ENCODE measurements at regions of chr1 and their contacts with region 1.

Region 1: DNA sequence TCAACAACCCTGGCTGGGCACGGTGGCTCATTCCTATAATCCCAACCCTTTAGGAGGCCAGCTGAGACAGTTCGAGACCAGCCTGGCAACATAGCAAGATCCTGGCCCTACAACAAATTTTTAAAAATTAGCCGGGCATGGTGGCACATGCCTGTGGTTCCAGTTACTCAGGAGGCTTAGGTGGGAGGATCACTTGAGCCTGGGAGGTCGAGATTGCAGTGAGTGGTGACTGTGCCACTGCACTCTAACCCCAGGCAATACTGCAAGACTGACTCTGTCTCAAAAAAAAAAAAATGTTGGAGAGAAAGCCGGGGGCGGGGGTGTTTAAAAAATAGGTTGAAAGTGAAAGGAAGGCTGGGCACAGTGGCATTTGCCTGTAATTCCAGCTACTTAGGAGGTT is 16.5 kb downstream of the CLDN19 start:
- DNase-seq: no peak
- H3K4me3 ChIP-seq: no peak overlapping the region
- H3K27ac ChIP-seq: no peak overlapping the region
- H3K4me1 ChIP-seq: no peaks in the 10 kb centered on the region
- H3K27me3 ChIP-seq: no peaks in the 10 kb centered on the region
- CTCF ChIP-seq: no peak
- POLR2A ChIP-seq: no peak

Region 2: GRCh38 chr1:42860339-42861013 is 137.0 kb after region 1 on chr1:
- intact Hi-C with region 1: no loop called
- DNase-seq: no peak
- H3K4me3 ChIP-seq: no peak overlapping the region
- H3K27ac ChIP-seq: no peak overlapping the region
- H3K4me1 ChIP-seq: no peaks in the 10 kb centered on the region
- H3K27me3 ChIP-seq: no peaks in the 10 kb centered on the region
- CTCF ChIP-seq: no peak
- POLR2A ChIP-seq: no peak

Region 3: DNA sequence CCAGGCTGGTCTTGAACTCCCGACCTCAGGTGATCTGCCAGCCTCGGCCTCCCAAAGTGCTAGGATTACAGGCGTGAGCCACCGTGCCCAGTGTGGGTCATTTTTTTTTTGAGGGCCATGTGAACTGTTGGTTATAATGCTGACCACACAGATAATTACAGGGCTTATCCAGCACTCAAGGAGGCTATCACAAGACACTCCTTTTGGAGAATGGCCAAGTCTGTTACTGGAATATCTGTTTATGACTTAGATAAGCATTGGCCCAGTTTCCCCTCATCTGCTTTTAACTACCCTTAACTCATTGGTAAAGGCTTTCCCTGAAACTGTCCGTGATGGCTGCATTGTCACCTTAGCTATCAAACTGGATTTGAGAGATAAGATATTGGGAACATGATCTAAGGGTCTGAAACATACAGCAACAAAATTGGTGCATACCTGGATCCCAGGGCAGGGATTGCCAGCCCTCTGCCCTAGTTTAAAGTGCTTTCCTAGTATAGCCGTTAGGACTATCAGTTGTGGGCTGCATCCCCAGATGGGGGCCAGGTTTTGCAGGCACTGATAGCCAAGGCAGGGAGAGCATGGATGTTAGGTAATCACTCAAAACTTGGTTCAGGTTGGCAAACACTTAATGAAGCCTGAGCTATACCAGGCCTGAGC is 681.8 kb after region 1 on chr1:
- intact Hi-C with region 1: loop called (anchors 5 kb)
- DNase-seq: no peak
- H3K4me3 ChIP-seq: no peak overlapping the region
- H3K27ac ChIP-seq: no peak overlapping the region
- H3K4me1 ChIP-seq: no peaks in the 10 kb centered on the region
- H3K27me3 ChIP-seq: no peaks in the 10 kb centered on the region
- CTCF ChIP-seq: no peak
- POLR2A ChIP-seq: no peak